ENCODE measurements at regions of chr9 and their contacts with region 1.

Region 1: DNA sequence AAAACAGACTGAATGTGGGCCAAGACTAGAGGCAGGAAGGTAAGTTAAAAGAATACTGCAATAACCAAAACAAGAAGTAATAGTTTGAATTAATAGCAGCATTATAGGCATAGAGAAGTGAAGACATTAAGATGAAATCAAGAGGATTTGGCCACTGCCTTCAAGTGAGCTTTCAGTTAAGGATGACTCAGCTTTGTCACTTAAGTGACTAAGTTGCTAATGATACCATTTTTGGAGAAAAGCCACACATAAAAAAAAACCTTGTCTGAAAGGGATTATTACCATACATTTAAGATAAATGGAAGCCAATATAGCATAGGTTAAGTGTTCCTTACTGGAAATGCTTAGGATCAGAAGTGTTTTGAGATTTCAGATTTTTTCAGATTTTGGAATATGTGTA is 57.0 kb downstream of the ECPAS start:
- DNase-seq: peak in 1 of 2 experiments; percentile 43
- H3K4me3 ChIP-seq: no peak overlapping the region
- H3K27ac ChIP-seq: no peak overlapping the region
- H3K4me1 ChIP-seq: peaks cover 18% of the 10 kb centered on the region; the same call in 1 of the 2 replicates
- H3K27me3 ChIP-seq: no peaks in the 10 kb centered on the region
- CTCF ChIP-seq: no peak

Region 2: GRCh38 chr9:111118256-111118948 is 308.8 kb before region 1 on chr9:
- CTCF ChIA-PET with region 1: interaction called, 13 read pairs
- POLR2A ChIA-PET with region 1: no interaction called
- intact Hi-C with region 1: no loop called
- DNase-seq: no peak
- H3K4me3 ChIP-seq: no peak overlapping the region
- H3K27ac ChIP-seq: no peak overlapping the region
- H3K4me1 ChIP-seq: no peaks in the 10 kb centered on the region
- H3K27me3 ChIP-seq: no peaks in the 10 kb centered on the region
- CTCF ChIP-seq: no peak

Region 3: DNA sequence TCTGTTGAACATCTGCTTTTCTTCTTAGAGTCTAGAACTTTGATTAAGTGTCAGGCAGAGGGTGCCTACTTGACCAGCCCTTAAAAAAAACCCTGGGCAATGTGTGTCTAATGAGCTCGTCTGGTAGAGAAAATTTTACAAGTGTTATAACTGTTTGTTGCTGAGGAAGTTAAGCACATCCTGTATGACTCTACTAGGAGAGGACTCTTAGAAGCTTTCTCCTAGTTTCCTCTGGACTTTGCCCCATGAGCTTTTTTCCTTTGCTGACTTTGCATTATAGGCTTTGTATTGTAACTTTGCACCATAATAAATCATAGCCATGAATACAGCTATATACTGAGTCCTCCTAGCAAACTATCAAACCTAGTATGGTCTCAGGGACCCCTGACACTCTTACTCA is 273.6 kb after region 1 on chr9:
- CTCF ChIA-PET with region 1: no interaction called
- POLR2A ChIA-PET with region 1: no interaction called
- intact Hi-C with region 1: loop called (anchors 10 kb)
- DNase-seq: no peak
- H3K4me3 ChIP-seq: no peak overlapping the region
- H3K27ac ChIP-seq: no peak overlapping the region
- H3K4me1 ChIP-seq: no peaks in the 10 kb centered on the region
- H3K27me3 ChIP-seq: no peaks in the 10 kb centered on the region
- CTCF ChIP-seq: no peak

Region 4: GRCh38 chr9:111839388-111839787 is 412.2 kb after region 1 on chr9:
- CTCF ChIA-PET with region 1: no interaction called
- POLR2A ChIA-PET with region 1: no interaction called
- intact Hi-C with region 1: no loop called
- DNase-seq: no peak
- H3K4me3 ChIP-seq: no peak overlapping the region
- H3K27ac ChIP-seq: no peak overlapping the region
- H3K4me1 ChIP-seq: peaks cover 15% of the 10 kb centered on the region
- H3K27me3 ChIP-seq: no peaks in the 10 kb centered on the region
- CTCF ChIP-seq: no peak